H1 (cell line): ENCODE measurements at regions of chr1 and their contacts with region 1.

Region 1: DNA sequence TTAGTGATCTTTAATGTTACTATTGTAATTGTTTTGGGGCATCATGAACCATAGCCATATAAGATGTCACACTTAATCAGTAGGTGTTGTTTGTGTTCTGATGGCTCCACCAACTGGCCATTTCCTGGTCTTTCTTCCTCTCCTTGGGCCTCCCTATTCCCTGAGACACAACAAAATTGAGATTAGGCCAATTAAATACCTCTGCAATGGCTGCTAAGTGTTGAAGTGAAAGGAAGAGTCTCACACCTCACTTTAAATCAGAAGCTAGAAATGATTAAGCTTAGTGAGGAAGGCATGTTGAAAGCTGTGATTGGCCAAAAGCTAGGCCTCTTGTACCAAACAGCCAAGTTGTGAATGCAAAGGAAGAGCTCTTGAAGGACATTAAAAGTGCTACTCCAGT is 30.7 kb downstream of the PPP2R5A start:
- DNase-seq: peak in 1 of 2 experiments; percentile 31
- H3K4me3 ChIP-seq: no peak overlapping the region
- H3K27ac ChIP-seq: no peak overlapping the region
- H3K4me1 ChIP-seq: peaks cover 0 to 6% (median 2%) of the 10 kb centered on the region in 4 experiments; a peak in 2 of 7 replicates
- H3K27me3 ChIP-seq: no peaks in the 10 kb centered on the region
- CTCF ChIP-seq: peak in 2 of 3 experiments; percentile 46 to 60; a peak in 3 of 4 replicates
- EP300 ChIP-seq: no peak
- POLR2A ChIP-seq: no peak
- RAD21 ChIP-seq: peak; percentile 75 to 78

Region 2: GRCh38 chr1:212284744-212285684 is 30.9 kb before region 1 on chr1 and contains the start of gene PPP2R5A:
- CTCF ChIA-PET with region 1: interaction called, 7 read pairs
- POLR2A ChIA-PET with region 1: interaction called, 17 read pairs
- DNase-seq: peak; percentile 93 to 98
- H3K4me3 ChIP-seq: peak within 1 kb of the TSS; percentile 85 to 92 (median 88)
- H3K27ac ChIP-seq: peak within 1 kb of the TSS; percentile 83
- H3K4me1 ChIP-seq: peaks cover 3 to 8% (median 6%) of the 10 kb centered on the region in 4 experiments; a peak in 5 of 7 replicates
- H3K27me3 ChIP-seq: no peaks in the 10 kb centered on the region
- CTCF ChIP-seq: peak; percentile 31 to 55 (median 48)
- EP300 ChIP-seq: peak in 1 of 2 experiments; percentile 26; a peak in 1 of 3 replicates
- POLR2A ChIP-seq: peak; percentile 10 to 91
- RAD21 ChIP-seq: peak in 1 of 2 experiments; percentile 12; a peak in 2 of 4 replicates
- total RNA-seq, gene PPP2R5A: 36.3 and 36.8 TPM in 2 replicates

Region 3: DNA sequence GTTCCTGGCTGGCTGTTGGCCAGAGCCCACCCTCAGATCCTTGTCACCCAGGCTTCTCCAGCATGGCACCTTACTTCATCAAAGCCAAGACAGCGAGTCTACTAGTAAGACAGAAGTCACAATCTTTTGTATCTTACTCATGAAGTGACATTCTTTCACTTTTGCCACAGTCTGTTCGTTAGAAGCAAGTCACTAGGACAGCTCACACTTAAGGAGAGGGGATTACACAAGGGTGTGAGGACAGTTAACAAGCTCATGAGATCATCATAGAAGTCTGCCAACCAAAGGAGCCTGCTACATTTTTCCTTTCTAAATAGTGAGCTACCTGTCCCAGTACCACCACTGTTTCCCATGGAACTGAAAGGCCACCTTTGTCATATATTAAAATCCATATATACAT is 37.3 kb after region 1 on chr1:
- CTCF ChIA-PET with region 1: no interaction called
- POLR2A ChIA-PET with region 1: no interaction called
- DNase-seq: no peak
- H3K4me3 ChIP-seq: no peak overlapping the region
- H3K27ac ChIP-seq: no peak overlapping the region
- H3K4me1 ChIP-seq: no peaks in the 10 kb centered on the region
- H3K27me3 ChIP-seq: no peaks in the 10 kb centered on the region
- CTCF ChIP-seq: no peak
- EP300 ChIP-seq: no peak
- POLR2A ChIP-seq: no peak
- RAD21 ChIP-seq: no peak

Region 4: DNA sequence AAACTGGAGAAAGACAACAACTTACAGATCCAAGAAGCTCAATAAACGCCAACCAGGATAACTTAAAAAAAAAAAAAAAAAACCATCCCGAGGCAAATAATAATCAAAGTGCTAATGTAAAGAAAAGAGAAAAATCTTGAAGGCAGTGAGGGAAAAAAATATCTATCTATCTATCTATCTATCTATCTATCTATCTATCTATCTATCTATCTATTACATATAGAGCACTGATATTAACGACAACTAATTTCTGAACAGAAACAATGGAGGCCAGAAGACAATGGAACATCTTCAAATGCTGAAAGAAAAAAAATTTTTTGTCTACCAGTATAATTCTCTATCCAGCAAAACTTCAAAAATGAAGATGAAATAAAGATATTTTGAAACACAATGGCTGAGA is 80.7 kb after region 1 on chr1:
- CTCF ChIA-PET with region 1: no interaction called
- POLR2A ChIA-PET with region 1: no interaction called
- DNase-seq: no peak
- H3K4me3 ChIP-seq: no peak overlapping the region
- H3K27ac ChIP-seq: no peak overlapping the region
- H3K4me1 ChIP-seq: no peaks in the 10 kb centered on the region
- H3K27me3 ChIP-seq: no peaks in the 10 kb centered on the region
- CTCF ChIP-seq: no peak
- EP300 ChIP-seq: no peak
- POLR2A ChIP-seq: no peak
- RAD21 ChIP-seq: no peak